Left cardiac atrium (tissue), 4 donors: ENCODE measurements at regions of chr17 and their contacts with region 1.

Region 1: GRCh38 chr17:59619293-59620063 is at the start of gene CLTC:
- DNase-seq: peak; percentile 93
- ATAC-seq: peak; percentile 93 to 96
- total RNA-seq, gene CLTC: 179 to 220 TPM

Region 2: DNA sequence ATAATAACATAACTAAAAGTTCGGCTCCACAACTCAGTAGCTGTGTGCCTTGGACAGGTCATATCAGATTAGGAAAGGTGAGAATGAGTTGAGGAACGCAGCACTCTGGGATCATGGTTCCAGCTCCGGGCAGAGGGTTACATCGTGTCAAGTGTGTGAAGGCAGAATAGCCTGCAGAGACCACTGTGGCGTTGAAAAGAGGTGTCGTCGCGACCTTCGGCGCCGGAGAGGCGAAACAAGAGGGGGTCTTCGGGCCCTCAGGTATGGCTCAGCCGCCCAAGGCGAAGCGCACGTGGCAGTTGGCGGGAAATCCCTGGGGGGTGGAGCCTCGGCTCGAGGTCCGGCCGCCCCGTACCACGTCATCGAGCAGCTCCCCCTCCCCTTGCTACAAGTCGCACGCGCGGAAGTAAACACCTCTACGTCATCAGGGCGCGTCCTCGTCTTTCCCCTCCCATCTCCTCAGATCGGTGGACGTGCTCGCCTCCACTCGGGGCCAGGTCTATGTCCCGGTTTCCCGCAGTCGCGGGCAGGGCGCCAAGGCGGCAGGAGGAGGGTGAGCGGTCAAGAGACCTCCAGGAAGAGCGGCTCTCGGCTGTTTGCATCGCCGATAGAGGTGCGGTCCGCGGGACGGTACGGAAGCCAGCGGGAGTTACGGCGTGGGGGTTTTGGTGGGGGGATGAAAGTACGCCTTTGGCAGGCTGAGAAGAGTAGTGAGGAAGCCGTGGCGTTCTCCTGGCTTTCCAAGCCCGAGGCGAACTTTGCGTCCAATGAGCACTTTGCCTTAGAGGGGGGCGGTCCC is 54.1 kb before region 1 on chr17 and contains the start of gene DHX40:
- intact Hi-C with region 1: loop called in 1 of 2 experiments (anchors 5 kb)
- DNase-seq: peak; percentile 97
- ATAC-seq: peak; percentile 99
- total RNA-seq, gene DHX40: 15.0 to 16.5 TPM

Region 3: DNA sequence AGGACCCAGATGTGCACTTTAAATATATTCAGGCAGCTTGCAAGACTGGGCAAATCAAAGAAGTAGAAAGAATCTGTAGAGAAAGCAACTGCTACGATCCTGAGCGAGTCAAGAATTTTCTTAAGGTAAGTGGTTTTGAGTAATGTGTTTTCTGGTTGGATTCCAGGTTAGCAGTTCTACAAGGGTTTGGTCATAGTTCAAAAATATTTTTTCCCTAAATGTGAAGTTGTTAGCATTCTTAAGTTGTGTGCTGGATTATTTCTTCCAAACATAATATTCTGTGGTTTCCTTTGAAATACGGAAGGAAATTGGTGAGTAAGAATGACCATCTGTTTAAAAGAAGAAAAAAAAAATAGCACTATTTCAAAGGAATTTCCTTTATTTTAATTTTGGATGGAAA is 49.3 kb after region 1 on chr17:
- intact Hi-C with region 1: no loop called
- DNase-seq: no peak
- ATAC-seq: peak; percentile 15 to 77

Region 4: GRCh38 chr17:59688008-59688407 is 68.5 kb after region 1 on chr17:
- intact Hi-C with region 1: no loop called
- DNase-seq: no peak
- ATAC-seq: no peak